ENCODE measurements at regions of chr9 and their contacts with region 1.

Region 1: GRCh38 chr9:114505187-114506081 is at the start of gene WHRN:
- DNase-seq: peak; percentile 91
- ATAC-seq: peak; percentile 84
- H3K4me3 Mint-ChIP-seq: peak within 1 kb of the TSS; percentile 75
- H3K27ac Mint-ChIP-seq: peak within 1 kb of the TSS; percentile 56
- H3K4me1 Mint-ChIP-seq: peaks cover 25% of the 10 kb centered on the region
- H3K27me3 Mint-ChIP-seq: peaks cover 63% of the 10 kb centered on the region
- total RNA-seq, gene WHRN: 2.6 to 4.1 TPM

Region 2: DNA sequence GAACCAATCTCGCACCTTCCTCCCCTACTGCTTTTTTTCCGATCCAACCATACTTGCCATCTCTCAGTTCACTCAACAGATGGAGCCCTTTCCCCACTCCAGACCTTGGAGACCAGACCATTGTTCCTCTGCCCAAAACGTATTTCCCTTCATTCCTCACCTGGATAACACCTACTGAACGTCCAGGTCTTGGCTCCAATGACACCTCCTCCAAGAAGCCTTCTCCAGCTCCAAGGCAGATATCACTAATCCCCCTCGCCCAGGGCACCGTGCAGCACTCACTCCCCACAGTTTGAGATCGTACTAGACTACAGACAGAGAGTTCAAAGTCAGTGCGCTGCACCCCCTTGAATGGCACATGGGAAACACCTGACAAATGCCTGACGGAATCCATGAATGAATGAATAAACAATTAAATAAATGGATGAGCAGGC is 70.5 kb before region 1 on chr9:
- CTCF ChIA-PET with region 1: interaction called, 10 read pairs
- POLR2A ChIA-PET with region 1: interaction called, 3 read pairs
- DNase-seq: no peak
- ATAC-seq: peak; percentile 30
- H3K4me3 Mint-ChIP-seq: no peak overlapping the region
- H3K27ac Mint-ChIP-seq: no peak overlapping the region
- H3K4me1 Mint-ChIP-seq: peaks cover 6% of the 10 kb centered on the region
- H3K27me3 Mint-ChIP-seq: peaks cover under 1% of the 10 kb centered on the region

Region 3: DNA sequence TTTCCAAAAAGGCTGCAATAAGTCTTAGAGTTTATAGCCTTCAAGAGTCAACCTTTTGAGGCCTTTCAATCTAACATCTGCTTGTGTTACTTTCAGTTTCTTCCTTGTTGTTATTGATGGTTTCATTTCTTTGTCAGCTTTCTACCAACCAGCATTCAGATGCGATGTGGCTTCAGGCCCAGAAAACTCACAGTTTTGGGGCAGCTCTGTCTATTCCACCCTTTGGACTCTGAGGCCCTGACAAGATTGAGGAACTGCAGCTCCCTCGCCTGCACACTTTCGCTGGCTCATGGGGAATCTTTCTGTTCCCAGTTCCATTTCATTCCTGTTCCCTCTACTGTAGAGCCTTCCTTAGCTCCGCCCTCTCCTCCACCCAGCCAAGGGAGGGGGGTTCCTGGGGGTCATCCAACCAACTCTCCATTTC is 13.2 kb after region 1 on chr9:
- CTCF ChIA-PET with region 1: interaction called, 17 read pairs
- POLR2A ChIA-PET with region 1: no interaction called
- DNase-seq: no peak
- ATAC-seq: no peak
- H3K4me3 Mint-ChIP-seq: no peak overlapping the region
- H3K27ac Mint-ChIP-seq: no peak overlapping the region
- H3K4me1 Mint-ChIP-seq: peaks cover 13% of the 10 kb centered on the region
- H3K27me3 Mint-ChIP-seq: peaks cover 34% of the 10 kb centered on the region

Region 4: GRCh38 chr9:114574438-114574837 is 69.0 kb after region 1 on chr9:
- CTCF ChIA-PET with region 1: no interaction called
- POLR2A ChIA-PET with region 1: no interaction called
- DNase-seq: no peak
- ATAC-seq: no peak
- H3K4me3 Mint-ChIP-seq: no peak overlapping the region
- H3K27ac Mint-ChIP-seq: no peak overlapping the region
- H3K4me1 Mint-ChIP-seq: no peaks in the 10 kb centered on the region
- H3K27me3 Mint-ChIP-seq: no peaks in the 10 kb centered on the region

Measured in activated CD8-positive, alpha-beta T cell treated with anti-CD3 and anti-CD28 coated beads, Interleukin-2, amount 10 ng/mL, durations not matched to agents 7 days and 5 days (primary cell).